ENCODE measurements at regions of chr10 and their contacts with region 1.

Region 1: GRCh38 chr10:47241257-47241656 is 58.7 kb upstream of the GDF10 start:
- DNase-seq: no peak
- H3K4me3 Mint-ChIP-seq: no peak overlapping the region
- H3K27ac Mint-ChIP-seq: no peak overlapping the region
- H3K4me1 Mint-ChIP-seq: peaks cover 3% of the 10 kb centered on the region
- H3K27me3 Mint-ChIP-seq: no peaks in the 10 kb centered on the region

Region 2: DNA sequence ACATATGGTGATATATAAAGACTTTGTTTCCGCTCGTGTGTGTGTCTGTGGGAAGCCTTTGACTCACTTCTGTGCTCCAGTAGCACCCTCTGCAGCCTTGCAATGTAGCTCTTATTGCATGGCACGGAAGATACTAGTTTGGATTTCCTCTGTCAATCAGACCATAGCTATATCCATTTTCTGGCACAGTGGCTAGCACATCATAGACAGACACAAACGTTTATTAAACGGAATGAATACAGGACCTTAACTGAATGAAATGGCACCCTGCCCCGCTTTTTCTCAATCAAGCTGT is 454.0 kb before region 1 on chr10:
- intact Hi-C with region 1: no loop called
- DNase-seq: peak; percentile 37
- H3K4me3 Mint-ChIP-seq: peak overlapping the region; percentile 99
- H3K27ac Mint-ChIP-seq: peak overlapping the region; percentile 98
- H3K4me1 Mint-ChIP-seq: peaks cover 21% of the 10 kb centered on the region
- H3K27me3 Mint-ChIP-seq: no peaks in the 10 kb centered on the region

Region 3: GRCh38 chr10:47181052-47181849 is 60.0 kb before region 1 on chr10:
- intact Hi-C with region 1: no loop called
- DNase-seq: no peak
- H3K4me3 Mint-ChIP-seq: no peak overlapping the region
- H3K27ac Mint-ChIP-seq: no peak overlapping the region
- H3K4me1 Mint-ChIP-seq: peaks cover 3% of the 10 kb centered on the region
- H3K27me3 Mint-ChIP-seq: no peaks in the 10 kb centered on the region

Region 4: GRCh38 chr10:47222461-47222860 is 18.8 kb before region 1 on chr10:
- intact Hi-C with region 1: loop called (anchors 2 kb)
- DNase-seq: no peak
- H3K4me3 Mint-ChIP-seq: no peak overlapping the region
- H3K27ac Mint-ChIP-seq: no peak overlapping the region
- H3K4me1 Mint-ChIP-seq: peaks cover 5% of the 10 kb centered on the region
- H3K27me3 Mint-ChIP-seq: peaks cover 2% of the 10 kb centered on the region

Region 5: GRCh38 chr10:47261121-47261520 is 19.9 kb after region 1 on chr10:
- intact Hi-C with region 1: no loop called
- DNase-seq: peak; percentile 9
- H3K4me3 Mint-ChIP-seq: no peak overlapping the region
- H3K27ac Mint-ChIP-seq: peak overlapping the region; percentile 89
- H3K4me1 Mint-ChIP-seq: peaks cover 75% of the 10 kb centered on the region
- H3K27me3 Mint-ChIP-seq: no peaks in the 10 kb centered on the region

Region 6: DNA sequence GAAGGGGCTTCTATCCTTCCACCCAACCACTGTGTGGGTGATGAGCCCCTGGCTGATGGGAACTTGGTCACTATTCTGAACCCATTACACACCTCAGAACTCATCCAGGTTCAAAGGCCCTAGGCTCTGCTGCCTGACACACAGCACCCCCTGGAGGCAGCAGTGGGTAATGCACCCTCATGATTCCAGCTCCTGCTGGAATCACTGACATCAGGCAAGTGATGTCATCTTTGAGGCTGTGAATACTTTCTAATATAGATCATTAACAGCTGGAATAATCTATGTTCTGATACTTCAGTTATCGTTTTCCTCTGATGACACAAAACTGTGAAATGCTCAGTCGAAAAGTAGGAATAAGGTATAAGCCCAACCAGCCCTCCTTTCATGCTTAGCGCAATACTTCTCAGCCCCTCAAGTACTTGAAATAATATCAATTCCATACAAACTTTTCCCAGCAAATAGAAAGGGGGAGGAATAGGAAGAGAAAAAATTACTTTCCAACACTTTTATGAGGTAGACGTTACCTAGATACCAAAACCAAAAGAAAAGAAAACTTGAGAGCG is 99.4 kb after region 1 on chr10:
- intact Hi-C with region 1: no loop called
- DNase-seq: peak; percentile 54
- H3K4me3 Mint-ChIP-seq: no peak overlapping the region
- H3K27ac Mint-ChIP-seq: no peak overlapping the region
- H3K4me1 Mint-ChIP-seq: peaks cover 3% of the 10 kb centered on the region
- H3K27me3 Mint-ChIP-seq: peaks cover 26% of the 10 kb centered on the region